H1 (cell line): ENCODE measurements at regions of chr2 and their contacts with region 1.

Region 1: DNA sequence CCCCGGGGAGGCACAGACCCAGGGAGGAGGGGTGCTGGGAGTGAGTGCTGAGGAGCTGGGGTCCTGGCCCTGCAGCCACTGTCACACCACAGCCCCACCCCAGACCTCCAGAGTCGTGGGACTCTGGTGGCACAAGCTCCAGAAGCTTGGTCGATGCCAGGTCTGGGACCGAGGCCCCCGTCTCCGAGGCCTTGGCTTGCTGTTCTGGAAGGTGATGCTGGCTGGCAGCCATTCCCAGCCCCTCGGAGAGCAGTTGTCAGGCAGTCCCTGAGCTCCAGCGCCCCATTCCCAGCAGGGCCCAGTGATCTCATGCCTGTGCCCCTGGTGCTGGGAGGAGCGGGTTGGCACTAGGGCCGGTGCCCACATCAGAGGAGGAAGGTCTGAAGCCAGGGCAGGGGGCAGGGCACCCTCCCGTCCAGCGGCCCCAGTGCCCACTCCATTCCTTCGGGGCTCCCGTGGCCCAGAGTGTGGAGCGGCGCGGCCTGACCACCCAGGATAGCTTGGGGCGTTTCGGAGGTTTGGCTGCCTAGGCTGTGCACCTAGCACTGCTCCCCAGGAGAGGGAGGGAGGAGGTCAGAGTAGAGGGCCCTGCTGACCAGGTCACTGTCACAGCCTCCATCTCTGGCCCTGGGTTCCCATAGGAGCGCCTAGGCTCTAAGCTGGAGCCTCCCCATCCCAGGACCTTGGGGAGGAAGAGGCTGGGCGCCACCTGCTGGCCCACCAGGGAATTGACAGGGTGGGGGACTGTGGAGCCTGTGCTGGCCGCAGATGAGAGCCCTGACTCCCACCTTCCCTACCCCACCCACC is 16.8 kb upstream of the ALPI start:
- DNase-seq: peak in 1 of 2 experiments; percentile 71
- H3K4me3 ChIP-seq: no peak overlapping the region
- H3K27ac ChIP-seq: no peak overlapping the region
- H3K4me1 ChIP-seq: peaks cover 0 to 6% (median 4%) of the 10 kb centered on the region in 4 experiments; a peak in 6 of 7 replicates
- H3K27me3 ChIP-seq: peaks cover 0 to 2% (median 0%) of the 10 kb centered on the region in 4 experiments; a peak in 3 of 7 replicates
- CTCF ChIP-seq: peak in 2 of 3 experiments; percentile 22 to 28; a peak in 2 of 4 replicates
- EP300 ChIP-seq: no peak
- POLR2A ChIP-seq: no peak
- RAD21 ChIP-seq: peak; percentile 36 to 45

Region 2: DNA sequence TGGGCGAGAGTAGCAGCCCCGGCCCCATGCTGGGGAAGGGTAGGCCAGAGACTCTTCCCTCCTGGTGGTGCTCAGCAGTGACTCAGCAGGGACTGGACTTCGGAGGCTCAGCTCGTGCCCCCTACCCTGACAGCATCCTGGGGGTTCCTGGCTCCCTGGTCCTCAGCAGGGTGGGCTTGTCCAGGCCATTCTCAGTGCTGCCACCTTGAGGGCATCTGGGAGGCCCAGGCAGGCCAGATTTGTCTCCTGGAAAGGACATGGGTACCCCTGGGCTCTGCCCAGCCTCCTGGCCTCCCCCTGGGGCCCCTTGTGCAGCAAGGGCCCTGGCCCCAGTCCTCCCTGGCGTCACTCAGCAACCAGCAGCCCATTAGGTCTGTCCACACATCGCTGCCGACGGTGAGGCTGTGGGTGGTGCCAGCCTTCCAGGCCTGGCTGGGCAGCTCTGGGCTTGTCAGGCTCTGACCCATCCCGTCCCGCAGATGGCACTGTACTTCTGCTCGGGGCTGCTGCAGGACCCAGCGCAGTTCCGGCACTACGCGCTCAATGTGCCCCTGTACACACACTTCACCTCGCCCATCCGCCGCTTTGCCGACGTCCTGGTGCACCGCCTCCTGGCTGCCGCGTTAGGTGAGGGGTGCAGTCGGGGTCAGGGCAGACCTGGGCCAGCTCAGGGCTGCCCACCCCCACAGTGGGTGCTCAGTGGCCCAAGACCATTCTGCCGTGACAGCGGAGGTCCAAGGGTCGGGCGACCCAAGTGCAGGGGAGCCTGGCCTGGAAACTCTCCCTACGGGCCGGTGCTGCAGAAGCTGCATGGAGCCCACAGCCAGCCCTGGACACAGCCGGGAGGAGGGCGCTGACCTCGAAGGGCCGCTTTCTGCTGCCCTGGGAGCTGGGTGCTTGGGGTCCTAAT is 105.5 kb before region 1 on chr2:
- CTCF ChIA-PET with region 1: interaction called, 67 read pairs
- POLR2A ChIA-PET with region 1: no interaction called
- DNase-seq: peak in 1 of 2 experiments; percentile 76
- H3K4me3 ChIP-seq: no peak overlapping the region
- H3K27ac ChIP-seq: no peak overlapping the region
- H3K4me1 ChIP-seq: peaks cover 0 to 9% (median 6%) of the 10 kb centered on the region in 4 experiments; a peak in 4 of 7 replicates
- H3K27me3 ChIP-seq: no peaks in the 10 kb centered on the region
- CTCF ChIP-seq: peak in 2 of 3 experiments; percentile 65 to 69; a peak in 3 of 4 replicates
- EP300 ChIP-seq: no peak
- POLR2A ChIP-seq: no peak
- RAD21 ChIP-seq: no peak; a peak in 1 of 4 replicates

Region 3: GRCh38 chr2:232372231-232373208 is 66.6 kb before region 1 on chr2:
- CTCF ChIA-PET with region 1: interaction called, 82 read pairs
- POLR2A ChIA-PET with region 1: interaction called, 5 read pairs
- DNase-seq: no peak
- H3K4me3 ChIP-seq: no peak overlapping the region
- H3K27ac ChIP-seq: no peak overlapping the region
- H3K4me1 ChIP-seq: peaks cover 0 to 23% (median 11%) of the 10 kb centered on the region in 4 experiments; a peak in 6 of 7 replicates
- H3K27me3 ChIP-seq: no peaks in the 10 kb centered on the region
- CTCF ChIP-seq: no peak
- EP300 ChIP-seq: no peak
- POLR2A ChIP-seq: no peak
- RAD21 ChIP-seq: no peak

Region 4: GRCh38 chr2:232406571-232407310 is 32.4 kb before region 1 on chr2 and contains the start of gene ALPG:
- CTCF ChIA-PET with region 1: interaction called, 16 read pairs
- POLR2A ChIA-PET with region 1: interaction called, 5 read pairs
- DNase-seq: no peak
- H3K4me3 ChIP-seq: no peak within 1 kb of the TSS
- H3K27ac ChIP-seq: no peak within 1 kb of the TSS
- H3K4me1 ChIP-seq: peaks cover 0 to 2% (median 0%) of the 10 kb centered on the region in 4 experiments; a peak in 2 of 7 replicates
- H3K27me3 ChIP-seq: no peaks in the 10 kb centered on the region
- CTCF ChIP-seq: no peak
- EP300 ChIP-seq: no peak
- POLR2A ChIP-seq: no peak
- RAD21 ChIP-seq: no peak
- total RNA-seq, gene ALPG: 0.56 and 0.75 TPM in 2 replicates